ENCODE measurements at regions of chr9 and their contacts with region 1.

Region 1: GRCh38 chr9:98707166-98708102 is 1.3 kb downstream of the GABBR2 start:
- DNase-seq: peak; percentile 85
- ATAC-seq: peak; percentile 86
- H3K4me3 ChIP-seq: peak overlapping the region; percentile 45
- H3K27ac ChIP-seq: peak overlapping the region; percentile 50
- H3K4me1 ChIP-seq: peaks cover 5% of the 10 kb centered on the region
- H3K27me3 ChIP-seq: peaks cover 10% of the 10 kb centered on the region
- CTCF ChIP-seq: peak; percentile 79
- POLR2A ChIP-seq: no peak
- RAD21 ChIP-seq: peak; percentile 89

Region 2: GRCh38 chr9:98074115-98074990 is 633.1 kb before region 1 on chr9:
- CTCF ChIA-PET with region 1: no interaction called
- POLR2A ChIA-PET with region 1: no interaction called
- dilution Hi-C with region 1: no loop called
- in situ Hi-C with region 1: no loop called
- intact Hi-C with region 1: loop called (anchors 5 kb)
- DNase-seq: peak; percentile 59
- ATAC-seq: peak; percentile 91
- H3K4me3 ChIP-seq: no peak overlapping the region
- H3K27ac ChIP-seq: 0 out of 2 replicates have a peak overlapping the region, but pooled peaks have one; percentile 0
- H3K4me1 ChIP-seq: peaks cover 5% of the 10 kb centered on the region
- H3K27me3 ChIP-seq: no peaks in the 10 kb centered on the region
- CTCF ChIP-seq: peak; percentile 94
- POLR2A ChIP-seq: no peak
- RAD21 ChIP-seq: peak; percentile 85

Region 3: DNA sequence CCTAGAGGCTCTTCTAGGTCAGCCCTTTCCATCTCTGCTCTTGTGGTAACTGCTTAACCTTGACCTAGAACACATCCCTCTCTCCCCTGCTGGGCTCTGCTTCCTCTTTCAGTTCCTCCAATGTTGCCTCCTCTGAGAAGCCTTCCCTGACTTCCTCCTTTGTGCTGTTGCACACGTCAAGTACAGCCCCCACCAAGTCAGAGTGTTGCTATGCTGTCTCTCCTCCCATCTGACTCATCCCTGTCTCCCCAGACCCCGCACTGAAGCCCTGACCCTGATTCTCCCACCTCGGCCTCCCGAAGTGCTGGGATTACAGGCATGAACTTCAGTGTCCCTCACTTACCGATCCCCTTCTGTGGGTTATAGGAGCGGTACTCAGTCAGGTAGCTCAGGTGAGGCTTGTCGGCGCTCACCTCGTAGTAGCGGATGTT is 578.0 kb before region 1 on chr9:
- CTCF ChIA-PET with region 1: no interaction called
- POLR2A ChIA-PET with region 1: no interaction called
- dilution Hi-C with region 1: no loop called
- in situ Hi-C with region 1: no loop called
- intact Hi-C with region 1: no loop called
- DNase-seq: peak; percentile 7
- ATAC-seq: peak; percentile 21; the same call in 1 of the 2 replicates
- H3K4me3 ChIP-seq: no peak overlapping the region
- H3K27ac ChIP-seq: no peak overlapping the region
- H3K4me1 ChIP-seq: no peaks in the 10 kb centered on the region
- H3K27me3 ChIP-seq: no peaks in the 10 kb centered on the region; the same call in 1 of the 2 replicates
- CTCF ChIP-seq: no peak
- POLR2A ChIP-seq: no peak
- RAD21 ChIP-seq: no peak

Region 4: GRCh38 chr9:98380065-98380681 is 327.3 kb before region 1 on chr9:
- CTCF ChIA-PET with region 1: no interaction called
- POLR2A ChIA-PET with region 1: no interaction called
- dilution Hi-C with region 1: no loop called
- in situ Hi-C with region 1: no loop called
- intact Hi-C with region 1: loop called (anchors 5 kb)
- DNase-seq: peak; percentile 65
- ATAC-seq: peak; percentile 82
- H3K4me3 ChIP-seq: no peak overlapping the region
- H3K27ac ChIP-seq: peak overlapping the region; percentile 68; the same call in 1 of the 2 replicates
- H3K4me1 ChIP-seq: peaks cover 10% of the 10 kb centered on the region
- H3K27me3 ChIP-seq: no peaks in the 10 kb centered on the region
- CTCF ChIP-seq: no peak
- POLR2A ChIP-seq: no peak
- RAD21 ChIP-seq: no peak

Region 5: DNA sequence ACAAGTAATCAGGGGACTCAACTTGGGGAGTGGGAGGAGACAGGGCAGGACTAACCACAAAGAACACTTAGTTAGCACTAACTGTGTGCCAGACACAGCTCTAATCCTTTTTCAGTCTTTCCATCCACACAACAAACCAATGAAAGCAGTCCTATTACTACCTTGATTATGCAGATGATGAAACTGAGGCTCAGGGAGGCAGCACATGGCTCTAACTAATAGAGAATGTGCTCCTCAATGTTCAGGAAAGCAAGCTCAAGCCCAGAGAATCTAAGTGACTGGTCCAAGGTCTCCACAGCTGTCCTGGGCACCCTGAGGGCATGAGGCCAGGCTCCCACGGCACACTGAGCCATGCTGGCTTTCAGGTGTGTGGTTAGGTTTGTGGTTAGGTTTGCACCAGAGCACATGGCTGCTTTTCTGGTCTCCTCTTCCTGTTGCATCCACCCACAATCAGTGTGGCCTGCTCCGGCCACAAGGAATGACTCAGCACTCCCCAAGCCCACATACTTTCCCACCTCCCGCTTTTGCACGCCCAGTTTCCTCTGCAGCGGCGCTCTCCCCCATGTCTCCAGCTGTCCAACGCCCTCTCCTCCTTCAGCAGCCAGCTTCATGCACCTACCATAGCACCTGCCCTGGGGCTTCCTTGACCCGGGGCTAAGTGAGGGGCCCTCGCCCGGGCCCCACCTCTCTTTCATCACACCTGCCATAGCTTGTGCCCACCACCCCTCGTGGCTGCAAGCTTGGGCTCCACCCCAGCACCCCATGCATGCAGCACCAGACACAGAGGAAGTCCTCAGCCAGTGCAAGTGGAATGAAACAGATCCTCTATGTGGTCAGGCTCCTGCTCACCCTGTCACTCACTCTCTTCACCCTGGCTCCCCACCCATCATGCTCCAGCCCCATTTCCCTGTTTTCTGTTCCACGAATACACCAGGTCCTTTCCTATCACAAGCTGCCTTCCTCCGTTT is 131.8 kb before region 1 on chr9:
- CTCF ChIA-PET with region 1: no interaction called
- POLR2A ChIA-PET with region 1: no interaction called
- dilution Hi-C with region 1: no loop called
- in situ Hi-C with region 1: no loop called
- intact Hi-C with region 1: loop called (anchors 10 kb)
- DNase-seq: peak; percentile 88
- ATAC-seq: peak; percentile 77
- H3K4me3 ChIP-seq: no peak overlapping the region
- H3K27ac ChIP-seq: peak overlapping the region; percentile 38
- H3K4me1 ChIP-seq: peaks cover 14% of the 10 kb centered on the region
- H3K27me3 ChIP-seq: no peaks in the 10 kb centered on the region
- CTCF ChIP-seq: no peak
- POLR2A ChIP-seq: no peak
- RAD21 ChIP-seq: no peak; the same call in 1 of the 2 replicates

Region 6: DNA sequence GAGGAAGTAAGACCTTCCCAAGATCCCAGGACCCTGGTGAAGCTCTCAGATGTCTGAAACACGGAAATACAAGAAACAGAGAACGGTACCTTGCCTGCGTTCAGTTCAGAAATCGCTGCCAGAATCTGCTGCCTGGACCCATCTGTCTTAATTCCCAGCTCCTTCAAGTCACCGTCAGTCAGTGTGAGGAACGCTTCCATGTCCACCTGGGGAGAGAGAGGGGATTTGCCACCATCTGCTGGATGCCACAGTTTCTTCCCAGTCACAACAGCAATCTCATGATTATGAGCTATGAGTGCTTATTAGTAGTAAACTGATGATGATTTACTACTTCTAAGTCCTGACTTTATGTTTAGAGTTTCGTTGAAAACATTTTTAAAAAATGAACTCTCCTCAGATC is 38.0 kb after region 1 on chr9:
- CTCF ChIA-PET with region 1: no interaction called
- POLR2A ChIA-PET with region 1: no interaction called
- dilution Hi-C with region 1: no loop called
- in situ Hi-C with region 1: no loop called
- intact Hi-C with region 1: no loop called
- DNase-seq: no peak
- ATAC-seq: no peak
- H3K4me3 ChIP-seq: no peak overlapping the region
- H3K27ac ChIP-seq: no peak overlapping the region
- H3K4me1 ChIP-seq: peaks cover 12% of the 10 kb centered on the region
- H3K27me3 ChIP-seq: no peaks in the 10 kb centered on the region
- CTCF ChIP-seq: no peak
- POLR2A ChIP-seq: no peak
- RAD21 ChIP-seq: no peak

Region 7: DNA sequence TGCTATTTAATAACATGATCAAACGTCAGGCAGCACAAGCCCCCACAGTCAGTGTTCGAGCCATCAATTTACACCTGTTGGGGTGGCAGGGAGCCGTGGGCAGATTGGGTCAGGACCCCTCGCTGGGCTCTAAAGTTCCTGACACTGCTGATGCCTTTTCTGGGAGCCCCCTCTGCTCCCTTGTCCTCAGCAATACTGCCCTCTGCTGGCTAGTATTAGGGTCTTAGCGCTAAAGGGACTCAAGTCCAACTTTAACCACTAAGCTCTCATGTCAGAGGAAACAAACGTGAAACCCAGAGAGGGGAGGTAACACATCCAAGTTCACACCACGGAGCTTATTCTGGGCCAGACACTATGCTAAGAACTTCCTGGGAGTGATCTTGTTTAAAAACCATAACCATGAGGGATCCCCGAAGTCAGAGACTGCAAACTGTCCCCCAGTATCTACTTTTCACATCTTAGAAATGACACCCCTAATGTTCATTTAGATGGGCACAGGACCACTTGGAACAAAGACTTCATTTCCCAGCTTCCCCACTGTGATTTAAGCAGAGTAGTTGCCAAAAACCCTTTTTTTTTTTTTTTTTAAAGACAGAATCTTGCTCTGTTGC is 68.5 kb after region 1 on chr9:
- CTCF ChIA-PET with region 1: no interaction called
- POLR2A ChIA-PET with region 1: no interaction called
- dilution Hi-C with region 1: no loop called
- in situ Hi-C with region 1: no loop called
- intact Hi-C with region 1: loop called (anchors 2 kb)
- DNase-seq: peak; percentile 79
- ATAC-seq: peak; percentile 79
- H3K4me3 ChIP-seq: no peak overlapping the region
- H3K27ac ChIP-seq: no peak overlapping the region
- H3K4me1 ChIP-seq: 0 out of 2 replicates have a peak, but pooled peaks cover 1% of the 10 kb centered on the region
- H3K27me3 ChIP-seq: no peaks in the 10 kb centered on the region
- CTCF ChIP-seq: peak; percentile 86
- POLR2A ChIP-seq: no peak
- RAD21 ChIP-seq: peak; percentile 90

Region 8: GRCh38 chr9:98998441-98999151 is 291.2 kb after region 1 on chr9:
- CTCF ChIA-PET with region 1: no interaction called
- POLR2A ChIA-PET with region 1: no interaction called
- dilution Hi-C with region 1: no loop called
- in situ Hi-C with region 1: no loop called
- intact Hi-C with region 1: no loop called
- DNase-seq: peak; percentile 56
- ATAC-seq: peak; percentile 86
- H3K4me3 ChIP-seq: no peak overlapping the region
- H3K27ac ChIP-seq: peak overlapping the region; percentile 31; the same call in 1 of the 2 replicates
- H3K4me1 ChIP-seq: peaks cover 17% of the 10 kb centered on the region
- H3K27me3 ChIP-seq: no peaks in the 10 kb centered on the region
- CTCF ChIP-seq: peak; percentile 78
- POLR2A ChIP-seq: no peak
- RAD21 ChIP-seq: peak; percentile 89